ENCODE measurements at regions of chr20 and their contacts with region 1.

Region 1: DNA sequence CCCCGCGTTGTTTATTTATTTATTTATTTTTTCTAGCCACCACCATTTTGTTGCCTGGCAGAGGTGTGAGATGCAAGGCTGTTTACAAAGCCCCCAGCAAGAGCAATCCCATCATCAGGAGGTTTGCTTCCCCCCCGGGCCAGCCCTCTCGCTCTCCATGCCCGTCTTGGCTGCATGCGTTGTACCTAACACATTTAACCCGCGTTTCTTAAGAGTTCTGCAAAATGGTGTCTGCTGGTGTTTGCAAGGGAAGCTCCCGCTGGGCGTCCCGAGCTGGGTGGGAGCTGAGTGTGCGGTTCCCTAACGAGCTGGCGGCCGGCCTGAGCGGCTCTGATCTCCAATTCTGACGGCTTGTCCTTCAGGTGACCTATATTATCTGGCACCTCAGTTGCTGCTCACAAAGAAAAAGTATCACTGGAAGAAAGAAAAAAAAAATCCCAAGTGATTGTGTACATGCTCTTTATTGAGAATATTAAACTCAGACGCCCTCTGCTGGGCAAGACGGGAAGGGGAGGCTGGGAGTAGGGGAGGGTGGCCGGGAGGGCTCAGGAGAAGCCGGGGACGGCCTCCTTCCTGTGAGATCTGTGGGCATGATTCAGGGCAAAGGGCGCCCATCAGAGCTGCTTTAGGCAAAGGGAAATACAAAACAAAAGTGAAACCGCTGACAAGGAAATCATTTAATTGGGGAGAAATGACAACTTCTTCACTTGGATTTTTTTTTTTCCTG is 154.8 kb downstream of the BCAS1 start:
- DNase-seq: peak; percentile 97

Region 2: DNA sequence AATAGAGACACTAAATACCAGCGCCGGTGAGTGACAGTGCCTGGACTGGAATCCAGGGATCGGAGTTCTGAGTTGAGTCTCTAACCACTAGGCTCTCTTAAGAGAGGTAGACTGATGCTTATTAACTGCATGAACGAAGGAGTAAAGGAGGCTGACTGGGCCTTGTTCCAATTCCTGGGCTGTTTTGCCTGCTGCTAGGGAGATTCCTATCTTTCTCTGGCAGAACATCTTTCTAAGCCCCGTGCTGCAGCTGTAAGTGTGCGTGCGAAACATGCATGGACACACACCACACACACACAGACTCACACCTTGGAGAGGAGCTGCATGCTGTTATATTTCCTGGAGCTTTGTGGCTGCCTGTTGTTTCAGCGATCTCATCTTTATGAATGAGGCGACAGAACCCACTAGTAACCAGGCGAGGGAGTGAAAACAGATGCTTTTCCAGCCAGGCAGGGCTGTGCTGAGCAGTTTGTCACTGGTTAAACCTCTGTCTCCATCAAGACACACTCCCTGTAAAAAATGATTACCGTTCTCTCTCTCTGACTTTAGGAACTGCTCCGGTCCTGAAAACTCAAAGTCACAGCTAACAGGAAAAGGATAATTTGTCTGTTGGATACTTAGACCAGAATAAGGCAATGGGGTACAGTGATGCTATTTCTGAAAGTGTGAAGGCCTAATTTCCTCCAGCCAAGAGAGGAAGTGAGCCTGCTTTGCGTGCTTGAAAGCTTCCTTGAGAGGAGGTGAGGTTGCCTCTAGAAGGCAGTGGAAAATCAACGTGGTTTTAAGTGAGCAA is 164.6 kb before region 1 on chr20:
- in situ Hi-C with region 1: loop called (anchors 25 kb)
- DNase-seq: peak; percentile 63

Region 3: GRCh38 chr20:53984356-53985149 is 68.9 kb after region 1 on chr20:
- in situ Hi-C with region 1: no loop called
- DNase-seq: no peak

Measured in Caki2 (cell line).